ENCODE measurements at regions of chr2 and their contacts with region 1.

Region 1: GRCh38 chr2:95121407-95122196 is at the start of gene MRPS5:
- DNase-seq: peak; percentile 90
- H3K4me3 Mint-ChIP-seq: peak within 1 kb of the TSS; percentile 93
- H3K27ac Mint-ChIP-seq: peak within 1 kb of the TSS; percentile 90
- H3K4me1 Mint-ChIP-seq: peaks cover 40% of the 10 kb centered on the region
- H3K27me3 Mint-ChIP-seq: no peaks in the 10 kb centered on the region
- total RNA-seq, gene MRPS5: 90.4 to 96.0 TPM

Region 2: DNA sequence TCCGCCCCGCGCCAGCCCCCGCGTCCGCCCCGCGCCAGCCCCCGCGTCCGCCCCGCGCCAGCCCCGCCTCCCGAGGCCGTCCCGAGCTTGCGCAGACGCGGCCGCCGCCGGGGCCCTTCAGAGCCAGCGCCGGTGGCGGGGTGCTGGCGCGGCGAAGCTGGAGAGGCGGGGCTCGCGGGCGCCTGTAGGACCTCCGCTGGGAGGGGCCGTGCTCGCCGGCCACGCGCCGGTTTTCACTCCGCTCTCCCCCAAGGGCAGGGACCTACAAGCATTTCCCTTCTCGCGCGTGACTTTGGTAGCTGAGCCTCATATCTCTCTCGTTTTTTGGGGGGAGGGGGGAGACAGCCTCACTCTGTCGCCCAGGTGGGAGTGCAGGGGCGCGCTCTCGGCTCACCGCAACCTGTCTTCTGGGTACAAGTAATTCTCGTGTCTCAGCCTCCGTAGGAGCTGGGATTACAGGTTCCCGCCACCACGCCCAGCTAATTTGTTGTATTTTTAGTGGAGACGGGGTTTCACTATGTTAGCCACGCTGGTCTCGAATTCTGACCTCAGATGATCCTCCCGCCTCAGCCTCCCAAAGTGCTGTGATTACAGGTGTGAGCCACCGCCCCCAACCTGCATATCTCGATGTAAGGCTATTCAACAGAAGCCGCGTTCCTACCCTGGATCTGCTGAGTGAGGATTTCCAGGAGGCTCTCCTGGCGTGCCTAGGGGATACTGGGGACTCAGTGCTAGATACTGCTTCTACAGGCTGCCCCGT is 38.3 kb after region 1 on chr2 and contains the start of gene ZNF514:
- CTCF ChIA-PET with region 1: interaction called, 3 read pairs
- intact Hi-C with region 1: loop called (anchors 1 kb)
- DNase-seq: peak; percentile 60
- H3K4me3 Mint-ChIP-seq: peak within 1 kb of the TSS; percentile 83
- H3K27ac Mint-ChIP-seq: peak within 1 kb of the TSS; percentile 74
- H3K4me1 Mint-ChIP-seq: peaks cover 21% of the 10 kb centered on the region
- H3K27me3 Mint-ChIP-seq: no peaks in the 10 kb centered on the region
- total RNA-seq, gene ZNF514: 9.1 to 9.7 TPM

Region 3: DNA sequence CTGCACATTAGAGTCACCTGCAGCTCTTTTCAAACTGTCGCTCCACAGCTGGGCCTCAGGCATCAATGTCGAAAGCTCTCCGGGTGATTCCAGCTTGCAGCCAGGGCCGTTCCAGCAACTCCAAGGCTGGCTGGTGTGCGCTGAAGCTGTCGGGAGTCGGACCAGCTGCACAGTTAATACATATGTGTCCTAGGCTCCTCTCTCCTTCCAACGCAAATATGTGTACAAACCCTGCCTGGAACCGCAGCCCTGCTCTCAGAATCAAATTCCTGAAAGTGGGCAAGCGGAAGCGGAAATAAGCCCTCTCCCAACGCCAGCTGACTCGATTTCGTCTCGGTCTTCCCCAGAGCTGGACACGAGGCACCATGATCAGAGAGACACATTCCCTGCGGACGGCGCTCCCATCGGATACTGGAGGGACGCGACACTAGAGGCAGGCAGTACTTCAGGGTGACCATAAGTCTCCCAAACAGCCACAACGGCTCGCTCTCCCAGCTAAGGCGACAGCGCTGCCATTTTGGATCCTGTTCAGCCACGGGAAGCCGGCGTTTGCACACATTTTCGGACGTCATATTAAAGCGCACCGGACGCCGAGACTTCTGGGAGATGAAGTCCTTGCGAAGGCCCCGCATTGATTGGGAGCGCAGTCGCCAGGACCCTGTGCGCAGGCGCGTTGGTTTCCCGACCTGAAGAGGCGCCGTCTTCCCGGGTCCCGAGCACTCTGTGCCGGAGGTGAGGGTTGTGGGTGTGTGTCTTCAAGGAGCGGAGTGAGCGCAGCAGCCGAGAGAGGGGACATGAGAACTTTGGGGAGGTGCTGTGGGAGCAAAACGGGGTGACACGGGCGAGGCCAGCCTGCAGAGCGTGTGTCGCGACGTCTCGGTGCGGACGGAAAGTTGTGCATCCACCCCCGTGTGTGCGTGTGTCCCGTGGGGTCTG is 43.8 kb after region 1 on chr2 and contains the start of gene ZNF2:
- CTCF ChIA-PET with region 1: interaction called, 3 read pairs
- intact Hi-C with region 1: loop called (anchors 1 kb)
- DNase-seq: peak; percentile 99
- H3K4me3 Mint-ChIP-seq: peak within 1 kb of the TSS; percentile 99
- H3K27ac Mint-ChIP-seq: peak within 1 kb of the TSS; percentile 89
- H3K4me1 Mint-ChIP-seq: peaks cover 22% of the 10 kb centered on the region
- H3K27me3 Mint-ChIP-seq: no peaks in the 10 kb centered on the region
- total RNA-seq, gene ZNF2: 2.6 to 3.1 TPM

Measured in activated naive CD4-positive, alpha-beta T cell treated with anti-CD3 and anti-CD28 coated beads for 36 hours (primary cell).